ENCODE measurements at regions of chr1 and their contacts with region 1.

Region 1: DNA sequence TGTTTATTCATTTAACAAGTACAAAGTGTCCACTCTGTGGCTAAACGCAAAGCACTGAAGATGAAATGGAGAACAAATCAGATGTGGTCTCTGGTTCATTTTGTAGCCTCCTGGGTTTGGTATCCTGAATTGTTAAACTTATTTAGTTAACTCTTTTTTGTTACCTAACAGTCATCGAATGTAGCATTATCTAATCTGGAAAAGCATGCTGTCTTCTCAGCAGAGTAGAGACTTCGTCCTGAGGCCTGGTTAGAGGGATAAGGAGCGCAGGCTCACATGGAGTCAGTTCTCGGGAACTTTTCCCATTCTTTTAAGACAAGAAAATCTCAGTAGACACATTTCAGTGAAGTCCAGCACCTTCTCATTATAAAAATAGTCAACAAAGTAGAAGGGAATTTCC is 33.1 kb upstream of the SH3D21 start:
- DNase-seq: no peak
- ATAC-seq: no peak
- H3K4me3 ChIP-seq: no peak overlapping the region
- H3K27ac ChIP-seq: peak overlapping the region in 4 of 12 donors; percentile 10 to 53 (median 38)
- H3K4me1 ChIP-seq: peaks cover 0 to 49% (median 14%) of the 10 kb centered on the region in 12 donors
- H3K27me3 ChIP-seq: no peaks in the 10 kb centered on the region
- CTCF ChIP-seq: no peak
- POLR2A ChIP-seq: no peak

Region 2: DNA sequence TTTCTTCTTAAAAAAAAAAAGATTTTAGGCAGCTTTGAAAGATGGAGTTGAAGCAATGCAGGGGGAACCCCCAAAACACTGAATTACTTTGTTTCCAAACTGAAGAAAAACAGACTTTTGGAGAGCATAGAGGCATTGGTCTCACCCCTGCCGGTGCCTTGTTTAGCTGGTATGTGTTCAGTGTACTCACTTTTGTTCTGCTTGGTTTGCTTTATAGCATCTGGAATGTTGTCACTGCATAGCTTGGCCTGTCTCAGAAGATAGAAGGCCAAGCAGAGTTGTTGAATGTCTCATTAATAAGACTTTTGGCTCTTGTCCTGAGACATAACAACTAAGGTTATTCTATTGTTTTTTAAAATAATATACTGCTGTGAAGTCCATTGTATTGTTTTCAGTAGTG is 41.8 kb before region 1 on chr1:
- intact Hi-C with region 1: loop called in 1 of 10 experiments (anchors 5 kb)
- DNase-seq: no peak
- ATAC-seq: peak in 2 of 4 donors; percentile 48 to 49
- H3K4me3 ChIP-seq: no peak overlapping the region
- H3K27ac ChIP-seq: peak overlapping the region in 8 of 12 donors; percentile 18 to 52 (median 38)
- H3K4me1 ChIP-seq: peaks cover 0 to 83% (median 70%) of the 10 kb centered on the region in 12 donors
- H3K27me3 ChIP-seq: no peaks in the 10 kb centered on the region
- CTCF ChIP-seq: no peak
- POLR2A ChIP-seq: no peak

Measured in heart left ventricle (tissue), 16 donors.